Cardiac septum (tissue), 1 donor: ENCODE measurements at regions of chr18 and their contacts with region 1.

Region 1: DNA sequence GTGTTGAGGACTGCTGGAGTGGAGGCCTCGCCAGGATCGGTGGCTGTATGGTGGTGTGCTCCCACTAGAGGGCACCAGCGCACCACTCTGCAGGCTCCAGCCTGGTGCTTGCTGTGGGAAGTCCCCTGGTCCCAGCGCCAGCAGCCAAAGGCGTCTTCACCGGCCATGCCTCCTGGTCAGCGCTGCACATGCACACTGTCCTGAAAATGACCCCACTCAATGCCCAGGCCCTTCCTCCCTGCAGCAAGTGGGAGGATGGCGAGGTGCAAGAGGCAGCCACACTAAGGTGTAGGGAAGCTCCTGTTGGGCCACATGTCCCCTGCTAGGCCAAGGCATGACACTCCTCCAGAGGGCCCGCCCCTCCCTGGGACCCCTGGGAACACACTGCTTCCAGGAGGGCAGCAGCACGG is 136.5 kb downstream of the CTIF start:
- DNase-seq: peak; percentile 94

Region 2: GRCh38 chr18:48356811-48357631 is 318.3 kb before region 1 on chr18:
- intact Hi-C with region 1: no loop called
- DNase-seq: peak; percentile 51

Region 3: DNA sequence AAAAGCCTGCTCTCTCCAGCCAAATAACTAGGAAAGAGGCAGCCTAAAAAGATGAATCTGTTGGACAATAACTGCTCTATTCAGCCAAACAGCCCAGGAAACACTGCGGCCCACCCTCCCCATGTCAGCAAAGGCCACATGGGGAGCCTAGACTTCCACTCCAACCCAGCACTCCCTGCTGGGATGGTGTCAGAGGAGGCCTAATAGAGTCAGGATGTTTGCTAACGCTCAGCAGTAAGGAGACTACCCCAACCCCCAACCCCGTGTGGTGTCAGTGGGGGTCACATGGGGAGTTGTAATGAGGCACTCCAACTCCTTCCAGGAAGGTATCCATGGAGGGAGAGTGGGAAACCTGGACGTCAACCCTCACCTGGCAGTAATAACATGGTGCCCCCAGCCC is 307.8 kb before region 1 on chr18:
- intact Hi-C with region 1: no loop called
- DNase-seq: no peak

Region 4: DNA sequence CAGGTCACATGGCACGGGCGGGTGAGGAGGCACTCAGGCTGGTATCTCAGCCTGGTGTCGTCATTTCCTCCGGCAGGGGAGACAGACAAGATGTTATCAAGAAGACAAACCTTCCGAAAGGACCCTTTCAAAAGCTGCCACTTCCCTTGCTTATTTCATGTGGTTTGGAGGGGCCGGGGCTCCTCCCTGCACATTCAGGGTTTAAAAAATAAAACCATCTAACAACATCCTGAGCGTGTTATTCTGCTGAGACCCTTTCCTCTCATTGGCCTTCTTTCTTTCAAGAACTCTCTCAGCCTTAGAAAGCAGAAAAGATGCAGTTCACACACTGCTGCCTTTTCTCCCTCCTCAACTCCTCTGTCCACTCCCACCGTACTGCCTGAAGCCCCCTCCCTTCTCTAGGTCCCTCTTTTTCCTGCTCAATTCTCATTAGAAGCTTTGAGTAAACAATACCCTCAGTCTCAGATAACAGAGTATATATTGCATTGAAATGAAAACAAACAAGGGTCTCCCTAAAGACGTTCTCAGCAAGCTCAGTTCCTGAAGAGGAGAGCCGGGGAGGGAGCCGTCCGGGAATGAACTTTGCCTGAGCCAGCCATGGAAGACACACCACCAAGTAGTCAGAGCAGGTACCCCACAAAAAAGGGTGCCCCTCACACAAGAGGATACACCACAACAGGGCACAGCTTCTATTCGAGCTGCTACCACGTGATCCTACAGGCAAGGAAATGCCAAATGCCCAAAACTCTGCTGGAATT is 265.7 kb after region 1 on chr18:
- intact Hi-C with region 1: loop called (anchors 5 kb)
- DNase-seq: no peak

Region 5: GRCh38 chr18:49041435-49042245 is 366.3 kb after region 1 on chr18:
- intact Hi-C with region 1: loop called (anchors 5 kb)
- DNase-seq: no peak

Region 6: GRCh38 chr18:49178736-49179135 is 503.4 kb after region 1 on chr18:
- intact Hi-C with region 1: loop called (anchors 2 kb)
- DNase-seq: no peak

Region 7: DNA sequence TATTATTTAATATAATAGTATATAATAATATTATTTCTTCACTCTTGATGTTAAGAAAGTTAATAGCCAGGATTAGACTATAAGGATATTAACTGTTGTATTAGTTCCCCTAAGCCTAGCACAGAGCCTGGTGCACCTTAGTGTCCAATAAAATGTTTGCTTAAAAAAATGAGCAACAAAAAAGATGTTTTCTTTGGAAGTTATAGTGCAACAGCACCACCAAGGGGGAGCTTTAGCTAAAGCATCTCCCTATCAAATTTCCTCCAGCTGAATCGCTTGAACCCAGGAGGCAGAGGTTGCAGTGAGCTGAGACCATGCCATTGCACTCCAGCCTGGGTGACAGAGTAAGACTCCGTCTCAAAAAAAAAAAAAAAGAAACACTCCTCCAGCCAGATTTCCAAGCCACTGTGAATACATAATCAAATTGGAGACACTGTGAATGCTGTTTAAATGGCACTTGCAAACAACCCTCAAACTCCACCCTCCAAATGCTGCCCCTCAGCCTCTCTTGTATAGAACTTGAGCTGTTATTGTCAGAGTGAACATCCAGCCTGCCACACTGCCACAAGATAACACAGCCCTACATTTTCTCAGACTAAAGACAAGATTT is 563.2 kb after region 1 on chr18:
- intact Hi-C with region 1: loop called (anchors 5 kb)
- DNase-seq: no peak

Region 8: GRCh38 chr18:49447810-49448745 is 772.7 kb after region 1 on chr18:
- intact Hi-C with region 1: loop called (anchors 10 kb)
- DNase-seq: no peak